ENCODE measurements at regions of chr1 and their contacts with region 1.

Region 1: DNA sequence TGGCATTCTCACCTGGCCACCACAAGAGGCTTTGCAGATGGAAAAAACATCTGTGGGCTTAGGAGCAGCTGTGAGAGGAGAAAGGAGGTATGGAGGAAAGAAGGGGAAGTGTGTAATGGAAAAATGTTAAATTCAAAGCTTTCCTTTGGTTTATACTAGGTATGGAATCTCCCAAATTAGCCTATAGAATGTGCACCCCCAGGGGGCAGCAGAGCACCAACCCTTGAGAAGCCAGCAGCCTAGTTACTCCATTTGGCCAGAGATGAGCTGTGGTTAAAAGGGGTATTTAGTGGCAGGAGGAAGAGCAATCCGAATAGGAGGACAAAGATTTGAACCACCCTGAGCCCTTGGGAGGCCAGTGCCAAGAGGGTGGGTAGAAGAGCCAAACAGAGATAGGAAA is 97.5 kb upstream of the CTTNBP2NL start:
- DNase-seq: peak; percentile 47 to 88
- H3K4me3 ChIP-seq: no peak overlapping the region
- H3K27ac ChIP-seq: no peak overlapping the region
- H3K4me1 ChIP-seq: no peaks in the 10 kb centered on the region
- H3K27me3 ChIP-seq: no peaks in the 10 kb centered on the region
- CTCF ChIP-seq: peak; percentile 53 to 80 (median 79)
- EP300 ChIP-seq: no peak
- POLR2A ChIP-seq: no peak
- RAD21 ChIP-seq: peak; percentile 80 to 84

Region 2: GRCh38 chr1:112247036-112247597 is 51.4 kb before region 1 on chr1:
- CTCF ChIA-PET with region 1: interaction called, 11 read pairs
- POLR2A ChIA-PET with region 1: no interaction called
- DNase-seq: no peak
- H3K4me3 ChIP-seq: no peak overlapping the region
- H3K27ac ChIP-seq: no peak overlapping the region
- H3K4me1 ChIP-seq: no peaks in the 10 kb centered on the region
- H3K27me3 ChIP-seq: no peaks in the 10 kb centered on the region
- CTCF ChIP-seq: no peak
- EP300 ChIP-seq: no peak
- POLR2A ChIP-seq: no peak
- RAD21 ChIP-seq: no peak

Region 3: GRCh38 chr1:112285746-112286145 is 12.8 kb before region 1 on chr1:
- CTCF ChIA-PET with region 1: interaction called, 30 read pairs
- POLR2A ChIA-PET with region 1: no interaction called
- DNase-seq: no peak
- H3K4me3 ChIP-seq: no peak overlapping the region
- H3K27ac ChIP-seq: no peak overlapping the region
- H3K4me1 ChIP-seq: no peaks in the 10 kb centered on the region
- H3K27me3 ChIP-seq: no peaks in the 10 kb centered on the region
- CTCF ChIP-seq: no peak
- EP300 ChIP-seq: no peak
- POLR2A ChIP-seq: no peak
- RAD21 ChIP-seq: no peak

Region 4: GRCh38 chr1:112312315-112312714 is 13.8 kb after region 1 on chr1:
- CTCF ChIA-PET with region 1: interaction called, 39 read pairs
- POLR2A ChIA-PET with region 1: no interaction called
- DNase-seq: no peak
- H3K4me3 ChIP-seq: no peak overlapping the region
- H3K27ac ChIP-seq: no peak overlapping the region
- H3K4me1 ChIP-seq: peaks cover 0 to 3% (median 1%) of the 10 kb centered on the region in 4 experiments; a peak in 2 of 7 replicates
- H3K27me3 ChIP-seq: no peaks in the 10 kb centered on the region
- CTCF ChIP-seq: no peak
- EP300 ChIP-seq: no peak
- POLR2A ChIP-seq: no peak
- RAD21 ChIP-seq: no peak

Region 5: GRCh38 chr1:112325504-112325903 is 26.9 kb after region 1 on chr1:
- CTCF ChIA-PET with region 1: interaction called, 12 read pairs
- POLR2A ChIA-PET with region 1: no interaction called
- DNase-seq: no peak
- H3K4me3 ChIP-seq: no peak overlapping the region
- H3K27ac ChIP-seq: no peak overlapping the region
- H3K4me1 ChIP-seq: peaks cover 0 to 2% (median 0%) of the 10 kb centered on the region in 4 experiments; a peak in 2 of 7 replicates
- H3K27me3 ChIP-seq: no peaks in the 10 kb centered on the region; a peak in 1 of 7 replicates
- CTCF ChIP-seq: no peak
- EP300 ChIP-seq: no peak
- POLR2A ChIP-seq: no peak
- RAD21 ChIP-seq: no peak

Region 6: DNA sequence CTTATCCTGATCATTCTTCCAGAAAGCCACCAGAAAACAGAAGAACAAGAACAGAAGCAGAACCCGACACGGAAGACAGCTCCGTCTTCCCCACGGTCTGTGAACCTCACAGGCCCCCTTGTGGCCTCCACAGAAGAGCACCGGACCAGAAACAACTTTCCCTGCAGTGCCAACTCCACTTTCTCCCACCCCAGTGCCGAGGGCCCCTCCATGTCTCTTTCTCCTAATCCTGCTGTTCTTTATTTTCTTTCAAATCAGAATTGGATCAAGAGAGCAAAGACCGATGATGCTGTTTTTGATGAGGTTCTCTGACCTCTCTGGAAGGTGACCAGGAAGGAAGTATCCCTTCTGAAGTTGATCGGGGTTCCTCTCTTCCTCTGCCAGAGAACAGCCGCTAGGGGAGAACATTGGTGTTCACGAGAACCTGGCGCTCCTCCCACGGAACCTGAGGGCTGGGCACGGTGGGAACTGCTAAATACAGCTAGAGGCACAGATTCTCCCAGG is 38.5 kb after region 1 on chr1:
- CTCF ChIA-PET with region 1: interaction called, 16 read pairs
- POLR2A ChIA-PET with region 1: no interaction called
- DNase-seq: no peak
- H3K4me3 ChIP-seq: no peak overlapping the region
- H3K27ac ChIP-seq: no peak overlapping the region
- H3K4me1 ChIP-seq: no peaks in the 10 kb centered on the region
- H3K27me3 ChIP-seq: no peaks in the 10 kb centered on the region
- CTCF ChIP-seq: peak; percentile 73 to 79 (median 74)
- EP300 ChIP-seq: no peak
- POLR2A ChIP-seq: no peak
- RAD21 ChIP-seq: peak; percentile 76 to 85

Region 7: GRCh38 chr1:112369392-112370285 is 71.1 kb after region 1 on chr1:
- CTCF ChIA-PET with region 1: interaction called, 17 read pairs
- POLR2A ChIA-PET with region 1: no interaction called
- DNase-seq: peak; percentile 78 to 98
- H3K4me3 ChIP-seq: no peak overlapping the region
- H3K27ac ChIP-seq: no peak overlapping the region
- H3K4me1 ChIP-seq: no peaks in the 10 kb centered on the region
- H3K27me3 ChIP-seq: no peaks in the 10 kb centered on the region
- CTCF ChIP-seq: peak; percentile 99 to 100 (median 99)
- EP300 ChIP-seq: no peak
- POLR2A ChIP-seq: no peak
- RAD21 ChIP-seq: peak; percentile 94 to 98